HCT116 (cell line): ENCODE measurements at regions of chr6 and their contacts with region 1.

Region 1: DNA sequence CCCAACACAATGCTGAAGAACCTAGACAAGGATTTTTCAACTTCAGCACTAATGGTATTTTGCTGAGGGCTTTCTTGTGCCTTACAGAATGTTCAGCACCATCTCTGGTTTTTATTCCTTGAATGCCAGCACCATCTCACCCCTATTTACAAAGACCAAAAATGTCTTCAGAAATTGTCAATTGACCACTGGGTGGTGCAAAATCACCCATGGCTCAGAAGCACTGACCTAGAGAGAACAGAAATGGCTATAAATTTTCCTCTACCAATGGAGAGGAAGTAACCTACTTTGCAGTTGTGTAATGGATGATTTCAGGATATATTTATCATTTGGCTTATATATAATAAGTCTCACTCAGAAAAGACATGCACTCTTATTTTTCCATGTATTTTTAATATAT is 431.0 kb upstream of the IRAK1BP1 start:
- DNase-seq: peak; percentile 19
- ATAC-seq: peak; percentile 70; the same call in 1 of the 2 replicates
- H3K4me3 ChIP-seq: no peak overlapping the region
- H3K27ac ChIP-seq: no peak overlapping the region
- H3K4me1 ChIP-seq: no peaks in the 10 kb centered on the region
- H3K27me3 ChIP-seq: no peaks in the 10 kb centered on the region
- CTCF ChIP-seq: peak; percentile 44 to 57 (median 53); a peak in 5 of 6 replicates
- POLR2A ChIP-seq: no peak
- RAD21 ChIP-seq: peak; percentile 59

Region 2: DNA sequence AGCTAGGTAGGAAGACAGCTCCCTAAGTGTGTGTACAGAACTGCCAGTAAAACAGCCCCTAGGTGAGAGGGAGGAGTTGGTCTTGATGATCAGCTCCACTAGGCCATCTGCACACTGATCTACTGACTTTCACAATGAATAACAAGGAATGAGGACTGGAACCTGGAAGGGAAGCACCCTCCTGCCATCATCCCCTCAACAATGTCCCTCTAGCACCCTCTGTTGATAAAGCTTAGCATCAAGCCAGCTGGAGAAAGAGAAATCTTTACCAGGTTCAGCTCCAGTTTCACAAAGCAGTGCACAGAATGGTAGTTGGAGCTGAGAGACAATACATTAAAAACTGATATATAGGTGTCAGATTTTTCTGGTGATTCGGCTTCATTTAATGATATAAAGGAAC is 373.8 kb after region 1 on chr6:
- CTCF ChIA-PET with region 1: interaction called, 7 read pairs
- POLR2A ChIA-PET with region 1: no interaction called
- RAD21 ChIA-PET with region 1: no interaction called
- intact Hi-C with region 1: loop called (anchors 1 kb)
- DNase-seq: peak; percentile 31
- ATAC-seq: peak; percentile 90
- H3K4me3 ChIP-seq: no peak overlapping the region
- H3K27ac ChIP-seq: no peak overlapping the region
- H3K4me1 ChIP-seq: no peaks in the 10 kb centered on the region
- H3K27me3 ChIP-seq: no peaks in the 10 kb centered on the region
- CTCF ChIP-seq: peak; percentile 47 to 67 (median 67); a peak in 5 of 6 replicates
- POLR2A ChIP-seq: no peak
- RAD21 ChIP-seq: peak; percentile 74